Activated CD8-positive, alpha-beta T cell treated with anti-CD3 and anti-CD28 coated beads for 36 hours (primary cell): ENCODE measurements at regions of chrX and their contacts with region 1.

Region 1: DNA sequence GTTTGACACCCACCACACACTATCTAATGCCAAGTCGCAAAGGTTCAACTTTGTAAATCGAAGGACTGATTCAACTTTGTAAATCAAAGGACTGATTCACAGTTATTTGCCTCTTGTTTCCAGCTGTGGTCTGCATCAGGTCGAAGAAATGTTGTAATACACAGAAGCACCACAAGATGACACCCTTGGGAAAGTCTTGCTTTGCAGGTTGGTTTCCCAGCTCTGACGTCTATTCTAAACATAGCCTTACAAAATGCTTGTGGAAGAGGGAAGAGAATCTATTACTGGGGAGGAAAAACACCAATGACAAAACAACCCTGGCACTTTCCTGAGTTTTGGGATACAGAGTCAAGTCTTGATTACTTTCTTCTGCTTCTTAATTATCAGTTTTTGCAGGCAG is 35.3 kb downstream of the SUPT20HL1 start:
- DNase-seq: peak; percentile 42
- ATAC-seq: peak; percentile 89
- H3K4me3 Mint-ChIP-seq: no peak overlapping the region
- H3K27ac Mint-ChIP-seq: no peak overlapping the region
- H3K4me1 Mint-ChIP-seq: peaks cover 2% of the 10 kb centered on the region
- H3K27me3 Mint-ChIP-seq: peaks cover 2% of the 10 kb centered on the region
- CTCF ChIP-seq: peak; percentile 64

Region 2: DNA sequence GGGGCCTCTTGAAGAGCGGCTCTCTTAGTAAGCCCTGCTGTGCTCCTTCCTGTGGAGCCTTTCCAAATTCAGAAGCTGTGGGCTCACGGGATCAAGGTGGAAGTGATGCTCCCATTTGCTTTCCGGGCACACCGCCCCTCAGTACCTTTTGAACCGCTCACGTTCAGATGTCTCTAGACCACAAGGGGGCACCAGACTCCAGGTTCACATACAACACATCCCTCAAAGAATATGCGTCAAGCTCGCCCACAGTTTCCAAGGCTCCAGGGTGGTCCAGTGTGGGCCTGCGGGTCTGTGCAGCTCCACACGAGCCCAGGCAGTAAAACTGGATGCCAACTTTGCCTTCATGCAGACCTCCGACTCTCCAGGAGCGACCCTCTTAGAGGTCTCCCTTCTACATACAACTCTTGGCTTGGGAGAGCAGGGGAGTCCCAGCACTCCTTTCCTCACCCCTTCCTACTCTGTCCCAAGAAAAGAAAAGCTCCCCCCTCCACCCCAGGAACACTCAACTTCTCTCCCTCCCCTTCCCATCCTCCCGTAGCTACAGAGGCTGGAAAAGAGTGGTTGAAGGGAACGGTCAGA is 24.3 kb before region 1 on chrX:
- CTCF ChIA-PET with region 1: interaction called, 30 read pairs
- POLR2A ChIA-PET with region 1: no interaction called
- intact Hi-C with region 1: no loop called
- DNase-seq: peak; percentile 82
- ATAC-seq: peak; percentile 79
- H3K4me3 Mint-ChIP-seq: peak overlapping the region; percentile 41
- H3K27ac Mint-ChIP-seq: no peak overlapping the region
- H3K4me1 Mint-ChIP-seq: peaks cover 4% of the 10 kb centered on the region
- H3K27me3 Mint-ChIP-seq: peaks cover 8% of the 10 kb centered on the region
- CTCF ChIP-seq: peak; percentile 58

Region 3: DNA sequence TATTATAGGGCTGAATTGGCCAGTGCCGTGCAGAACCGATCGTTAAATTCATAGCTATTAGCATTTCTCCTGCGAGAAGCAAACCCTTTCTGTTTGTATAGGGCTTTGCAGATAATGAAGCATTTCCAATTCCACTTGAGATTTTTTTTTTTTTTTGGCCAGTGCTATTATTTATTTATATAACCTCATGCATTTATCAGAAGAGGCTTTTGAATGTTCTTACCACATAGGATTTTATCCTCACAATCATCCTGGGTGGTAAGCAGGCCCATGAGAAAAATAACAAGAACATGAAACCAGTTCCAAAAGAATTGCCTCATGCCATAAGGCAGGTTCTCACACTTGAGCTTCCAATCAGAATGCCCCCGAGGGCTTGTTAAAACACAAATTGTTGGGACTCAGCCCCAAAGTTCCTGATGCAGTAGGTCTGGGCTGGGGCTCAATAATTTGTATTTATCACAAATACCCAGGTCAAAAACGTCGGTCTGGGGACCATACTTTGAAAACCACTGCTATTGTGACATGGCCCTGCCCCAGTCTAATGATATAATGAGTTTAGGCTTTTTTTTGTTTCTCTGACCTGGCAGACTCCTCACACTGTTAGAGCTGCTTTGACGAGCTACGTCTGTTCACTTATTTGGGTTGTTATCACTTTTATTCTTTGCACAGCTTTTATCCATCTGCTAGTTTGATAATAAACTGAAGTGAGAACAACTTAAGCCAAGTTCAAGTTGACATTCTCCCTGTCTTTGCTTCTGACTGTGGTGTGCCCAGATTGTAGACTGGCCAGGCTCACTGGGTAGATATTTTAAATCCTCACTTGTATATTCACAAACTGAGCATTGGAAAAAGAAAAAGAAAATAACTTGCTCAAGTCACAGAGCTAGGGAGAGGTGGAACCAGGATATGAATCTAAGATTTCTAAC is 15.2 kb before region 1 on chrX:
- CTCF ChIA-PET with region 1: interaction called, 11 read pairs
- POLR2A ChIA-PET with region 1: no interaction called
- intact Hi-C with region 1: no loop called
- DNase-seq: no peak
- ATAC-seq: no peak
- H3K4me3 Mint-ChIP-seq: no peak overlapping the region
- H3K27ac Mint-ChIP-seq: no peak overlapping the region
- H3K4me1 Mint-ChIP-seq: no peaks in the 10 kb centered on the region
- H3K27me3 Mint-ChIP-seq: peaks cover 1% of the 10 kb centered on the region
- CTCF ChIP-seq: no peak

Region 4: DNA sequence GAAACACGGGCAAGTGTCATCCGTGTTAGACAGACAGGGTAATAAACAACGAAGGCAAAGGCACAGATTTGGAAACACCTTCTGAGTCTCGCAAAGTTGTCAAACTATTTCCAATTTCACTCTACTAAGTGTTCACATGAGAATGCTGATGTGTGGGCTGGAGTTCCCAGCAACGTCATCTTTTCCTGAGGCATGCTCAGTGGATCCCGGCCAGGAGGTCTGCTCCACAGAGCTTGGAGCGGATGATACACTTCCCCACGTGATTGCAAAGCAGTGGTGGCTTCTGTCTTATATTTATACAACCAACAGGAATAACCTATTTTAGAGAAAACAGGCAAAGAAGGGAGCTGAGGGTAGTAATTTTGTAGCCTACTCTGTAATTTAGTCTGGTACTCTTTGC is 29.2 kb after region 1 on chrX:
- CTCF ChIA-PET with region 1: no interaction called
- POLR2A ChIA-PET with region 1: no interaction called
- intact Hi-C with region 1: no loop called
- DNase-seq: no peak
- ATAC-seq: no peak
- H3K4me3 Mint-ChIP-seq: no peak overlapping the region
- H3K27ac Mint-ChIP-seq: no peak overlapping the region
- H3K4me1 Mint-ChIP-seq: peaks cover 3% of the 10 kb centered on the region
- H3K27me3 Mint-ChIP-seq: no peaks in the 10 kb centered on the region
- CTCF ChIP-seq: no peak

Region 5: DNA sequence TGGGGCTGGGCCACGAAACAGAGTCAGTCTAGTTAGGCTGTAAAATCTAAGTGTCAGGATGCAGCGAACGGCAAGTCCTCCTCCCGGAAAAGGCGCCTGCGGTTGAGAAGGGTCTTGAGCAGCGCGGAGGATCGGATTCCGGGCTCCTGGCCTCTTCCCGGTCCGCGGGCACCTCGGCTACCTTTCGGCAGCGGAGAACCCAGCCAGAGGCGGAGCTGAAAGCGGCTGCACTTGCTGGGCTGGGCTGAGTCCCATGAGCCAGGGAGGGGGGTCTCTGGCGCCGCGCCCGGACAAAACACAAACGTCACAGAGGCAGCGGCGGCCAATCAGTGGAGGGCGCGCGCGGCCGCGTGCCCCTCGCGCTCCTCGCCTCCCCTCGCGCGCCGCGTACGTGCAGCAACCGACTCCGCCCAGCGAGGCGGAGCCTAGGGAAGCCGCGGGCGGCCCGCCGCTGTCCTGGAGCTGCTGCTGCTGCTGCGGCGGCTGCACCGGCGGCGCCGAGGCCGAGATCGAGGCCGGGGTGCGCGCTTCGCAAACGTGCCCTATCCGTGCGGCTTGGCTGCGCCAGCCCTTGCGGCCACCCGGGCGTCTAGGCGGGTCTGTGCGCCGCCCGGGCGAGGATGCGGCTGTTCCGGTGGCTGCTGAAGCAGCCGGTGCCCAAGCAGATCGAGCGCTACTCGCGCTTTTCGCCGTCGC is 69.2 kb after region 1 on chrX and contains the start of gene PDK3:
- CTCF ChIA-PET with region 1: interaction called, 13 read pairs
- POLR2A ChIA-PET with region 1: no interaction called
- intact Hi-C with region 1: no loop called
- DNase-seq: peak; percentile 90
- ATAC-seq: peak; percentile 97
- H3K4me3 Mint-ChIP-seq: peak within 1 kb of the TSS; percentile 82
- H3K27ac Mint-ChIP-seq: peak within 1 kb of the TSS; percentile 91
- H3K4me1 Mint-ChIP-seq: peaks cover 30% of the 10 kb centered on the region
- H3K27me3 Mint-ChIP-seq: no peaks in the 10 kb centered on the region
- CTCF ChIP-seq: no peak
- total RNA-seq, gene PDK3: 46.4 to 50.8 TPM

Region 6: GRCh38 chrX:24479924-24480323 is 84.1 kb after region 1 on chrX:
- CTCF ChIA-PET with region 1: interaction called, 12 read pairs
- POLR2A ChIA-PET with region 1: no interaction called
- intact Hi-C with region 1: no loop called
- DNase-seq: peak; percentile 86
- ATAC-seq: peak; percentile 96
- H3K4me3 Mint-ChIP-seq: peak overlapping the region; percentile 74
- H3K27ac Mint-ChIP-seq: peak overlapping the region; percentile 96
- H3K4me1 Mint-ChIP-seq: peaks cover 65% of the 10 kb centered on the region
- H3K27me3 Mint-ChIP-seq: no peaks in the 10 kb centered on the region
- CTCF ChIP-seq: no peak

Region 7: GRCh38 chrX:24498975-24499374 is 103.2 kb after region 1 on chrX:
- CTCF ChIA-PET with region 1: interaction called, 101 read pairs
- POLR2A ChIA-PET with region 1: no interaction called
- intact Hi-C with region 1: loop called (anchors 1 kb)
- DNase-seq: no peak
- ATAC-seq: peak; percentile 84
- H3K4me3 Mint-ChIP-seq: no peak overlapping the region
- H3K27ac Mint-ChIP-seq: peak overlapping the region; percentile 34
- H3K4me1 Mint-ChIP-seq: peaks cover 25% of the 10 kb centered on the region
- H3K27me3 Mint-ChIP-seq: no peaks in the 10 kb centered on the region
- CTCF ChIP-seq: peak; percentile 54

Region 8: GRCh38 chrX:24561121-24561520 is 165.3 kb after region 1 on chrX:
- CTCF ChIA-PET with region 1: interaction called, 11 read pairs
- POLR2A ChIA-PET with region 1: no interaction called
- intact Hi-C with region 1: no loop called
- DNase-seq: no peak
- ATAC-seq: no peak
- H3K4me3 Mint-ChIP-seq: no peak overlapping the region
- H3K27ac Mint-ChIP-seq: no peak overlapping the region
- H3K4me1 Mint-ChIP-seq: no peaks in the 10 kb centered on the region
- H3K27me3 Mint-ChIP-seq: no peaks in the 10 kb centered on the region
- CTCF ChIP-seq: peak; percentile 19